ENCODE measurements at regions of chr6 and their contacts with region 1.

Region 1: DNA sequence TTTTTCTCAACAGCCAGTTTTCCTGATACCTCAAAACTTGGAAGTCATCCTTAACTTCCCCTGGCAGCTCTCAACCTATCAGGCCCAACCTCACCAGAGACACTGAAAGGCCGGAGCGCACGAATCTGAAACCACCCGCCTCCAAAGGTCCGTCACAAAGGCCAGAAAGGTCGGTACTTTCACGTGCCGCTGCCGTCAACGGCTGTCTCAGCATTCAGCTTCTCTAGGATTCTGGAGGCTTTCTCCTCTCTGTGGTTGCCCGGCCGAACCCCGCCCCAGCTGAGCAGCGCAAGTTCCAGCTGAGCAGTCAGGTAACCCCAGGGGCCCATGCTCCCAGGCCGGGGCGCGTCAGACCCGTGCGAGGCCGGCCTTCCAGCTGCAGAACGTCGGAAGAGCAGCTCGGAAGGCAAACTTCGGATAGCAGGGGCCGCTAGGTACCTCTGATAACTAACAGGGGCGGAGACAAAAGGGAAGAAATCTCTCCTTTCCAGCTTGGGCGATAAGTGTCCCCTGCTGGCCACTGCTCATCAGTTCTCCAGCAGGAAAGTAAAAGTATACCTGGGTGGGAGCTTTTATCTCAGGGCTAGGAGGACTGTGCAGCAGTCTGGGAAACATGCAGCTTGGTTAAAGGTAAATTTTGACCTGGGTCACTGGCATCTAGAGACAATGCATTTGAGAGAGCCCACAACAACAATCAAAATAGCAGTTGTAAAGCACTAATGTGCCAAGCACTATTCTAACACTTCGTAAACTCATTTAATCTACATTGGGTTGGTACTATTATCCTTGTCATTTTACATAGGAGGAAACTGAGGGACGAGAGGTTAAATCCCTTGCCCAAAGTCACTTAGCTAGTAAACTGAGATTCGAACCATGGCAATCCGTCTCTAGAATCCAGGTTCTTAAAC is 16.1 kb downstream of the ZSCAN12 start:
- DNase-seq: peak; percentile 93
- ATAC-seq: peak; percentile 98
- H3K4me3 ChIP-seq: peak overlapping the region; percentile 59 to 74 (median 72)
- H3K27ac ChIP-seq: peak overlapping the region; percentile 56
- H3K4me1 ChIP-seq: peaks cover 39% of the 10 kb centered on the region
- H3K27me3 ChIP-seq: no peaks in the 10 kb centered on the region
- CTCF ChIP-seq: peak; percentile 72
- EP300 ChIP-seq: peak in 1 of 2 experiments; percentile 35; a peak in 2 of 4 replicates
- POLR2A ChIP-seq: peak; percentile 41 to 70; a peak in 2 of 4 replicates
- RAD21 ChIP-seq: peak; percentile 75

Region 2: GRCh38 chr6:28104392-28105244 is 278.9 kb before region 1 on chr6:
- CTCF ChIA-PET with region 1: no interaction called
- POLR2A ChIA-PET with region 1: interaction called, 11 read pairs
- in situ Hi-C with region 1: no loop called
- intact Hi-C with region 1: no loop called
- DNase-seq: peak; percentile 80
- ATAC-seq: peak; percentile 100
- H3K4me3 ChIP-seq: peak overlapping the region; percentile 62 to 84 (median 71)
- H3K27ac ChIP-seq: peak overlapping the region; percentile 35
- H3K4me1 ChIP-seq: peaks cover 15% of the 10 kb centered on the region
- H3K27me3 ChIP-seq: no peaks in the 10 kb centered on the region; a peak in 1 of 5 replicates
- CTCF ChIP-seq: peak; percentile 84
- EP300 ChIP-seq: 0 out of 4 replicates have a peak, but pooled peaks of 1 of the 2 experiments have one; percentile 24
- POLR2A ChIP-seq: peak; percentile 73 to 92
- RAD21 ChIP-seq: peak; percentile 72

Region 3: GRCh38 chr6:28252009-28252975 is 131.2 kb before region 1 on chr6 and contains the start of gene ZKSCAN4:
- CTCF ChIA-PET with region 1: no interaction called
- POLR2A ChIA-PET with region 1: interaction called, 12 read pairs
- in situ Hi-C with region 1: no loop called
- intact Hi-C with region 1: no loop called
- DNase-seq: peak; percentile 88
- ATAC-seq: peak; percentile 94
- H3K4me3 ChIP-seq: peak within 1 kb of the TSS; percentile 85 to 98 (median 97)
- H3K27ac ChIP-seq: peak within 1 kb of the TSS; percentile 30
- H3K4me1 ChIP-seq: peaks cover 27% of the 10 kb centered on the region
- H3K27me3 ChIP-seq: no peaks in the 10 kb centered on the region; a peak in 1 of 5 replicates
- CTCF ChIP-seq: no peak
- EP300 ChIP-seq: peak in 1 of 2 experiments; percentile 56; a peak in 1 of 4 replicates
- POLR2A ChIP-seq: peak; percentile 42 to 74; a peak in 3 of 4 replicates
- RAD21 ChIP-seq: no peak; the same call in 1 of the 2 replicates
- total RNA-seq, gene ZKSCAN4: 7.8 and 10.2 TPM in 2 replicates

Region 4: DNA sequence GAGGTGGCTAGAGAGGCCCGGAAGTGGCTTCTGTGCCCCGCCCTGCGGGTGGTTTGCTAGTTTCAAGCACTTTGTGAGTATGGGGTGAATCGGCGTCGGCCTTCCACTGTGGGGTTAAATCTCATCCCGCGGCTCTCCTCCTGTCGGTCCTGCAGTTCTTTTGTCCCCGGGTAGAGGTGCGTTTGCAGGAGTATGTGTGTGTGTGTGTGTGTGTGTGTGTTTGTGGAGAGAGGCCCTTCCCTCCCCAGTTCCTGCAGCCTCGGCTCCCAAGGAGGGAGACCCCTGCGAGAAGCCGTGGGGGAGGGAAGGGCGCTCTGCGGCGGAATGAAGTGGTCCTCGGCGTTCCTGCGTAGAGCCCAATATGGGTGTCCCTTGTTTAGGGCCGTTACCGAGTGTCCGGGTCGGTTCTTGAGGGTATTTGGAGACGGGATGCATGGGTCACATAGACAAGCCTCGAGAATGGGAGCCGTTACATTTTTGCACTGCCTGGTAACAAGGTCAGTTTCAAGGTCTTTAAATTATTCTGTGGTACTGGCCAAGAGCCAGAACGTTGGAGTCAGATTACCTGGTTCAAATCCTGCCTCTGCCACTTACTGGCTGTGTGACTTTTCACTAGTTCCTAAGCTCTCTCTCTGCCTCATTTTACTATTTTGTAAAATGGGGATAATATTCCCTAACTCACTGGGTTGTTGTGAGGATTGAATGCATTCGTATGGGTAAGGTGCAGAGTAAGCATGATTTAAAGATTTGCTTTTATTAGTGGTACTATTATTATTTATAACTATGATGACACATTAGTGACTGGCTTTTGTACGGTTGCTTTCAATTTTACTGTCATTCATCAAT is 33.4 kb before region 1 on chr6 and contains the start of gene ZKSCAN3:
- CTCF ChIA-PET with region 1: no interaction called
- POLR2A ChIA-PET with region 1: interaction called, 27 read pairs
- in situ Hi-C with region 1: no loop called
- intact Hi-C with region 1: loop called (anchors 1 kb)
- DNase-seq: peak; percentile 84
- ATAC-seq: peak; percentile 97
- H3K4me3 ChIP-seq: peak within 1 kb of the TSS; percentile 63 to 98 (median 85)
- H3K27ac ChIP-seq: peak within 1 kb of the TSS; percentile 77
- H3K4me1 ChIP-seq: peaks cover 32% of the 10 kb centered on the region
- H3K27me3 ChIP-seq: no peaks in the 10 kb centered on the region; a peak in 1 of 5 replicates
- CTCF ChIP-seq: 0 out of 2 replicates have a peak, but pooled peaks have one; percentile 19
- EP300 ChIP-seq: no peak
- POLR2A ChIP-seq: peak; percentile 81 to 88
- RAD21 ChIP-seq: peak; percentile 27; the same call in 1 of the 2 replicates
- total RNA-seq, gene ZKSCAN3: 7.4 and 8.1 TPM in 2 replicates

Region 5: DNA sequence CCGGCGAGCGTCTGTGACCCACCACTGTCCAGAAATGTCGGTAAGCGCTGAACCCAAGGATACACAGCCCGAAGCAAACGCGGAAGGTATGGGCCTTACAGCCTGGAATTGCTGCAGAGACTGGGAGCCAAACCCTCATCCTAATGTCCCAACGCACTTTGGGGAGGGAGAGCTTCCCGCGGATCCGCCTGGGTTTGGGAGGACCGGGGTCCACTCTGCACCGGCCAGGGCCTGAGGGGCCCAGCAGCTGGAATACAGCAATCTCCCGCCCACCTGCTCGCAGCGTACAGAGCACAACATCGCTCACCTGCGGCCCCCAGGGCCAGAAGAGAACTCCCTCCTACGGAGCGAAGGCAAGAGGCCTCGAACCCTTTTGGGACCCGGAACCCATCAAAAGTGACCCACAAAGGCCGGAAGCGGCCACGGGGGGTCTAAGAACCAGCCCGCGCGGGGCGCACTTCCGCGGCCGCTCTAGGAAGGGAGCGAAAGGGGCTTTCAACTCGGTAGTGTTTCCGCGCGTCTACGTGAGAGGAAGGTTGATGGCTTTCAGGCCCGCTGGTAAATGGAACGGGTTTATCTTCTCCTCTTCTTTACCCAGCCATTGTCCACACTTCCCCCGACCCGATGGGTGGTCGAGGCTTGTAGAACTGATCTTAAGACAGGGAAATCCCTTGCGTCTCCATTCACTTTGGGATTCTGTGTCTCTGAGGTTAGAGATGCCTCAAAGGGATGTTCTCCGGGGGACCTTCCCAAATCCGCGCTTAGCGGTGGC is 16.0 kb after region 1 on chr6 and contains the start of gene ZSCAN12:
- CTCF ChIA-PET with region 1: no interaction called
- POLR2A ChIA-PET with region 1: interaction called, 21 read pairs
- in situ Hi-C with region 1: no loop called
- intact Hi-C with region 1: loop called (anchors 1 kb)
- DNase-seq: peak; percentile 86
- ATAC-seq: peak; percentile 98
- H3K4me3 ChIP-seq: peak within 1 kb of the TSS; percentile 82 to 99 (median 94)
- H3K27ac ChIP-seq: peak within 1 kb of the TSS; percentile 68
- H3K4me1 ChIP-seq: peaks cover 49% of the 10 kb centered on the region
- H3K27me3 ChIP-seq: no peaks in the 10 kb centered on the region; a peak in 1 of 5 replicates
- CTCF ChIP-seq: peak; percentile 94
- EP300 ChIP-seq: peak in 1 of 2 experiments; percentile 64; a peak in 3 of 4 replicates
- POLR2A ChIP-seq: peak; percentile 83 to 90
- RAD21 ChIP-seq: peak; percentile 67
- total RNA-seq, gene ZSCAN12: 8.9 and 9.8 TPM in 2 replicates

Region 6: DNA sequence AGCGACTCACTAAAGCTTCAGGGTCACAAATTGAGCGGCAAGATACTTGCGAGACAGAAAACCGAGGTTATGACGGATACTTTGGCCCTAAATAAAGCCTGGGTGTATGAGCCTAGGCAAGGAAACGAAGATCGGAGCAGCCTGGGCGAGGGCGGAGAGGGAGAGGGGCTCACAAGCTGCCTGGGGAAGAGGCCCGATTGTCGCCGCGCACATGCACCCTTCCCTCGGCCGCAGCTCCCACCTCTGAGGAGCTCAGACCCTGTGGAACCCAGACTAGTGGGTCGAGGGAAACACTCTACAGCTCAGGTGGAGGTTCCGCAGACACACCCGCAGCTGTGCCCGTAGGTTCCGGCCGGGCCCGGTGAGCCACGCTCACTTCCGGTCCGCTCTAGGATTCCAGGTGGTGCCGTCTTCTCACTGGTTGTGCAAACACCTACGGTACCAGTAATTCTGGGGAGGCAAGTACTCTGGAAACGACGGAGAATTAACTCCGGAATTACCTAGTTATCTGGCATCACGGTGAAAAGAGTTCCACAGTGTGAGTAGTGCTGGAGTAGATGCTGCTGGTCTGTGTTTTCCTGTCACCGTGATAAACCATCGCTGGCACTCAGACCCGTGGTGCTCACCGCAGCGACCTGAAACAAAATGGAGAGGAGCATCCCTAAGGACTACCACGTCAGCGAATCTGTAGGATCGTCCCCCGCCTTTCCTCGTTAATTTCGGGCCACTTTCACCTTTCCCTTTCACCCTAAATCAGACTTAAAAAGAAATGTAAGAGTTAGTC is 203.7 kb after region 1 on chr6:
- CTCF ChIA-PET with region 1: no interaction called
- POLR2A ChIA-PET with region 1: interaction called, 7 read pairs
- in situ Hi-C with region 1: no loop called
- intact Hi-C with region 1: loop called (anchors 5 kb)
- DNase-seq: peak; percentile 82
- ATAC-seq: peak; percentile 93
- H3K4me3 ChIP-seq: peak overlapping the region; percentile 74 to 86 (median 82)
- H3K27ac ChIP-seq: peak overlapping the region; percentile 62
- H3K4me1 ChIP-seq: peaks cover 50% of the 10 kb centered on the region
- H3K27me3 ChIP-seq: no peaks in the 10 kb centered on the region; a peak in 1 of 5 replicates
- CTCF ChIP-seq: peak; percentile 44; the same call in 1 of the 2 replicates
- EP300 ChIP-seq: peak in 1 of 2 experiments; percentile 35; a peak in 1 of 4 replicates
- POLR2A ChIP-seq: peak; percentile 86 to 98
- RAD21 ChIP-seq: peak; percentile 45; the same call in 1 of the 2 replicates